ENCODE measurements at regions of chr5 and their contacts with region 1.

Region 1: DNA sequence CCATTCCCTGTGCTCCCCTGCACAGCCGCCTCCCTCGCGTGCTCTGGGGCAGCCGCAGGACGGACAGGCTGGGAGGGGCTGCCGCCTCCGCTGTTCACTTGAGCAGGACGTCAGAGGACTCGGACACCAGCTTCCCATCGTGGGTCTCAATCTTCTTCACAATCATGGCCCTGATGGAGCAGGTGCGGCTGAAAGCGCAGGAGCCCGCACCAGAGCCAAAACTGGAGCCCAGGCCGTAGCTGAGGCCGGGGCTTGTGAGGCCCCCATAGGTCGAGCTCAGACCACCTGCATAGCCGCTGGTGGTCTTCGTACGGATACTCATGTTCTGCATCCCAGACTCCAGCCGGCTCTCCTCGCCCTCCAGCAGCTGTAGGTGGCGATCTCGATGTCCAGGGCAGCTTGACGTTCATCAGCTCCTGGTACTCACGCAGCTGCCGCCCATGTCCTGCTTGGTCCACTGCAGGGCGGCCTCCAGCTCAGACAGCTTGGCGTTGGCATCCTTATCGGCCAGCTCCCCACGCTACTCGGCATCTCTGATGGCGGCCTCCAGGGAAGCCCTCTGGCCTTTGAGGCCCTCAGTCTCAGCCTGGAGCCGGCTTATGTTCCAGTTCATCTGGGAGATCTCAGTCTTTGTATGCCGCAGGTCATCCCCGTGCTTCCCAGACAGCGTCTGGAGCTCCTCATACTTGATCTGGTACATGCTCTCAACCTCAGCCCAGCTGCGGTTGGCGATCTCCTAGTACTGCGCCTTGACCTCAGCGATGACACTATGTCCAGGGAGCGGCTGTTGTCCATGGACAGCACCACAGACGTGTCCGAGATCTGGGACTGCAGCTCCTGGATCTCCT is 43.7 kb upstream of the DEPDC1B start:
- DNase-seq: no peak
- H3K4me3 ChIP-seq: no peak overlapping the region
- H3K27ac ChIP-seq: no peak overlapping the region
- H3K4me1 ChIP-seq: no peaks in the 10 kb centered on the region
- H3K27me3 ChIP-seq: no peaks in the 10 kb centered on the region
- CTCF ChIP-seq: no peak

Region 2: DNA sequence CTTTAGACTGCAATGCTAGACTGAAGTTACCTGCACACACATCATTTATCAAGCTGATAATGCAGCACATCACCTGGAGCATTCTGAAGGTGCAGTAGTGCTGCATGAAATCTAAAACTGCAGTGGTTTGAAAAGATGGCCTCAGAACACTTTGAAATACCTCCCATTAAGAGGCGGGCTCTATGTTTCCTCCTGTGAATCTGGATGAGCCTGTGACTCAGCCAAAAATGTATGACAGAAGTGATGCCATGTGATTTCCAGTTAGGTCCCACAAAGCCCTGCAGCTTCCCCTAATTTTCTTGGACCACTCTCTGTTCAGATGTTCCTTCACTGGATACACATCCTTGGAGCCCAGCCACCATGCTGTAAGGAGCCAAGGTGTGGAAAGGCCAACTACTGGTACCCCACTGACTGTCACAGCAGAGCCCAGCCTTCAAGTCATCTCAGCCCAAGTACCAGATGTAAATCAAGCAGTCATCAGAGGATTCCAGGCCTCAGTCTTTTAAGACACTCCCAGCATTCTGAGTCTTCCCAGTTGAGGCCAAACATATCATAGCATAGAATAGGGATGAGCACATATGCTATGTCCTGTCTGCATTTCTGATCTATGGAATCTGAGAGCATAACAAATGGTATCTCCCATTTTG is 16.5 kb before region 1 on chr5:
- CTCF ChIA-PET with region 1: no interaction called
- POLR2A ChIA-PET with region 1: interaction called, 18 read pairs
- intact Hi-C with region 1: no loop called
- DNase-seq: peak; percentile 13
- H3K4me3 ChIP-seq: no peak overlapping the region
- H3K27ac ChIP-seq: no peak overlapping the region
- H3K4me1 ChIP-seq: no peaks in the 10 kb centered on the region
- H3K27me3 ChIP-seq: peaks cover 8% of the 10 kb centered on the region
- CTCF ChIP-seq: no peak